A673 (cell line): ENCODE measurements at regions of chr5 and their contacts with region 1.

Region 1: GRCh38 chr5:156197042-156197635 is 129.8 kb upstream of the SGCD start:
- DNase-seq: no peak
- H3K4me3 ChIP-seq: no peak overlapping the region
- H3K27ac ChIP-seq: no peak overlapping the region
- H3K4me1 ChIP-seq: no peaks in the 10 kb centered on the region
- H3K27me3 ChIP-seq: no peaks in the 10 kb centered on the region
- CTCF ChIP-seq: no peak

Region 2: GRCh38 chr5:156221816-156222215 is 24.7 kb after region 1 on chr5:
- CTCF ChIA-PET with region 1: no interaction called
- POLR2A ChIA-PET with region 1: interaction called, 11 read pairs
- intact Hi-C with region 1: no loop called
- DNase-seq: no peak
- H3K4me3 ChIP-seq: no peak overlapping the region
- H3K27ac ChIP-seq: no peak overlapping the region
- H3K4me1 ChIP-seq: no peaks in the 10 kb centered on the region
- H3K27me3 ChIP-seq: no peaks in the 10 kb centered on the region
- CTCF ChIP-seq: no peak